ENCODE measurements at regions of chr1 and their contacts with region 1.

Region 1: DNA sequence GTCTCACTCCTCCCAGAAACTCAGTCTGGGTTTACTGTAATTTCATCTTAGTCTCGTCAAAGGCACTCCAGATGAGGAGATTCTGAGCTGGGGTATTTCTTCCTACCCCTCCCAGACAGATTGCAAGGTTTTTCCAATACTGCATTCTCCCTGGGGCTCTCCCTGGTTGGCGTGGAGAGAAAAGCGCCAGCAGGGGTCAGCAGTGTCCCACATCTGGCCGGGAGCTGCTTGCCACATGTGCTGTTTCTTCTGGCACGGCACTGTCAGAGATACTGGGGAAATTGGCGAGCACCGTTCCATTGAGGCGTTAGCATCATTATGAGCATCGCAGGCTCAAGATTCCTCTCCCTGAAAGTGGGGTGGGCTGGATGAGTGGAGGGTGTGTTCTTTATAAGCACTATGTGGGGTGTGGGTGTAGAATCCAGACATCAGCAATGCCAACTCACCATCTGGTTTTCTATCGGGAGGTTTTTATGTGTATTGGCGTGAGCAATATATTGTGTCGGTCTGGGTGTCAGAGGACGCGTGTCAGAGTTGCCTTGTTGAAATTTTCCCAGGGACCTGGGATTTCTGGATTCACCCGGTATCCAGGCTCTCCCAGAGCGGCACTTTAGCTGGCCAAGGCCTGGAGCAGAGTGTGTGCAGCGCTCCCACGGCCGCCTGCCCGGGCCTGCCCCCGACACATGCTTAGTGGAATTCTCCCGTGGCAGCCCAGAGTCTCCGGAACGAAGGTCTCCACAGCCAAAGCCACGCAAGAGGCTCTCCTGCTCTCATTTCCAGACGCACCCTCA is 8.0 kb upstream of the NAV1 start:
- DNase-seq: peak; percentile 83
- ATAC-seq: peak; percentile 82
- H3K4me3 ChIP-seq: no peak overlapping the region
- H3K27ac ChIP-seq: no peak overlapping the region
- H3K4me1 ChIP-seq: peaks cover 13% of the 10 kb centered on the region
- H3K27me3 ChIP-seq: no peaks in the 10 kb centered on the region
- CTCF ChIP-seq: peak; percentile 97
- POLR2A ChIP-seq: peak; percentile 43; the same call in 1 of the 2 replicates
- RAD21 ChIP-seq: peak; percentile 95

Region 2: DNA sequence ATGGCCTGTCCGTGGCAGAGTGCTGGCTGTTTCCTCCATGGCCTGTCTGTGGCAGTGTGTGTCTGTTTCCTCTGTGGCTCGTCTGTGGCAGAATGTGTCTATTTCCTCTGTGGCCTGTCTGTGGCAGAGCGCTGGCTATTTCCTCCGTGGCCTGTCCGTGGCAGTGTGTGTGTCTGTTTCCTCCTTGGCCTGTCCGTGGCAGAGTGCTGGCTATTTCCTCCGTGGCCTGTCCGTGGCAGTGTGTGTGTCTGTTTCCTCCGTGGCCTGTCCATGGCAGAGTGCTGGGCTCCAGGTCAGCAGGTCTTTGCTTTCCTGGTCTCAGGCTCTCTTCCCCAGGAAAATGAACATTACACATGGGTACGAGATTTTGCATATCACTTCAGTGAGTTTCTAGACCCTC is 159.6 kb after region 1 on chr1:
- CTCF ChIA-PET with region 1: no interaction called
- POLR2A ChIA-PET with region 1: no interaction called
- dilution Hi-C with region 1: no loop called
- in situ Hi-C with region 1: no loop called
- intact Hi-C with region 1: no loop called
- DNase-seq: no peak
- ATAC-seq: no peak
- H3K4me3 ChIP-seq: no peak overlapping the region
- H3K27ac ChIP-seq: no peak overlapping the region
- H3K4me1 ChIP-seq: peaks cover 28% of the 10 kb centered on the region
- H3K27me3 ChIP-seq: no peaks in the 10 kb centered on the region
- CTCF ChIP-seq: no peak
- POLR2A ChIP-seq: no peak
- RAD21 ChIP-seq: no peak

Region 3: DNA sequence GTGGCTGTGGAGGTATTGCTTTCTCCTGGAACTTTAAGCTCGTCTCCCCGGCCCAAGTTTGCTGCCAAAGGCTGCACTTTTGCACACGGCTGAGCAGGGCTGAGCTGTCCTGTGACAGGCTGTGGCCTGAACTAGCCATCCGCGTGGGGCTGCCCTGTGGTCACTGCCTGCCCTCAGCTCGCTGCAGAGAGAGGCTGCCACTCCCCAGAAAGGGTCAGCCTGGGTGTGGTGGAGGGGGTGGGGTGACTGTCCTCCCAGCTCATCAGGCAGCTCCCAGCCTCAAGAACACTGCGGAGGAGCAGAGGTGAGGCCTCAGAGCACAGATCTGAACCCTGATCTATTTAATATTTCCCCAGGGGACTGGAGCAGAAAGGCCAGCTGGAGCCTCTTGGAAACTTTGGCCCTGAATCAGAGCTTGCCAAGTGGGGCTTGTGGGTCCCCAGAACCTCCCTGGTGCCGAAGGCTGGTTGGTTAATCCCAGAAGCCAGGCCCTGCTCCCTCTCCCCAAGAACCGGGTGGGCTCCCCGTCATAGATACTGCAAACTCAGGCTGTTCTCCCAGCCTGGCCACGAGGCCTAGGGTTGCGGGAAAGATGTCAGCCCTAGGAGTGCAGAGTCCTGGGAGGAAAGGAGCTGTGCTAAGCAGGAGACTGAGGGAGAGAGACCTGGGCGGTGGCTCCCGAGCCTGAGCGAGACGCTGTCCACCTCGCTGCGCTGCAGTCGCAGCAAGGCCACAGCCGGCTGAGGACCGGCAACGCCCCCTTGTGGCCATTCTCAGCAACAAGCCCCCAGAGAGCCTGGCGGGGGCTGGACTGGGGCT is 172.9 kb after region 1 on chr1:
- CTCF ChIA-PET with region 1: no interaction called
- POLR2A ChIA-PET with region 1: no interaction called
- dilution Hi-C with region 1: no loop called
- in situ Hi-C with region 1: no loop called
- intact Hi-C with region 1: loop called (anchors 1 kb)
- DNase-seq: peak; percentile 77
- ATAC-seq: peak; percentile 81
- H3K4me3 ChIP-seq: no peak overlapping the region
- H3K27ac ChIP-seq: peak overlapping the region; percentile 69
- H3K4me1 ChIP-seq: peaks cover 20% of the 10 kb centered on the region
- H3K27me3 ChIP-seq: no peaks in the 10 kb centered on the region
- CTCF ChIP-seq: peak; percentile 95
- POLR2A ChIP-seq: peak; percentile 61; the same call in 1 of the 2 replicates
- RAD21 ChIP-seq: peak; percentile 97

Region 4: GRCh38 chr1:201792534-201793305 is 261.8 kb after region 1 on chr1:
- CTCF ChIA-PET with region 1: interaction called, 5 read pairs
- POLR2A ChIA-PET with region 1: no interaction called
- dilution Hi-C with region 1: no loop called
- in situ Hi-C with region 1: no loop called
- intact Hi-C with region 1: loop called (anchors 1 kb)
- DNase-seq: peak; percentile 85
- ATAC-seq: peak; percentile 84
- H3K4me3 ChIP-seq: no peak overlapping the region
- H3K27ac ChIP-seq: peak overlapping the region; percentile 69
- H3K4me1 ChIP-seq: peaks cover 32% of the 10 kb centered on the region
- H3K27me3 ChIP-seq: no peaks in the 10 kb centered on the region
- CTCF ChIP-seq: peak; percentile 97
- POLR2A ChIP-seq: peak; percentile 35; the same call in 1 of the 2 replicates
- RAD21 ChIP-seq: peak; percentile 99

Region 5: DNA sequence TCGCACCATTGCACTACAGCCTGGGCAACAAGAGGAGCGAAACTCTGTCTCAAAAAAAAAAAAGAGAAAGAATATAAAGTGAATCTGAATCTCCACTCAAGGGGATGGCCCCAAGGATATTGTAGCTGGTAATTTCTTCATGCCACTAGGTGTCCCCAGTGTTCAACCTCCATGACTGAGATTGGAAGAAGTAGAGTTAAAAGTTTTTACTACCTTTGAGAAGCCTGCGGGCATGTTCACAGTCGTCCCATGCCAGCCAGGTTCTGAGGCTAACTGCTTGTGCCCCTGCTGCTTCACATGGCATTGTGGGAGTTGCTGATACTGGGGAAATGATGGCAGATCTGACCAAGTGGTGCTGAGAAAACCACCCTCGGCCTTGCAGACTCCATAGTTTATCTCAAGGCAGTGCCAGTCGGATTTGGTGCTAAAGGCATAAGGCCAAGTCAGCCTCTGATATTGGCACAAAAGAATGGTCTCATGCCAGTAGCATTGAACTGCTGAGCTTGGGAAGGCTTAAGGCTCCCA is 347.0 kb after region 1 on chr1:
- CTCF ChIA-PET with region 1: no interaction called
- POLR2A ChIA-PET with region 1: no interaction called
- dilution Hi-C with region 1: no loop called
- in situ Hi-C with region 1: no loop called
- intact Hi-C with region 1: loop called (anchors 2 kb)
- DNase-seq: peak; percentile 63
- ATAC-seq: peak; percentile 75
- H3K4me3 ChIP-seq: no peak overlapping the region
- H3K27ac ChIP-seq: no peak overlapping the region
- H3K4me1 ChIP-seq: peaks cover 4% of the 10 kb centered on the region
- H3K27me3 ChIP-seq: no peaks in the 10 kb centered on the region
- CTCF ChIP-seq: peak; percentile 73
- POLR2A ChIP-seq: no peak
- RAD21 ChIP-seq: peak; percentile 71

Region 6: DNA sequence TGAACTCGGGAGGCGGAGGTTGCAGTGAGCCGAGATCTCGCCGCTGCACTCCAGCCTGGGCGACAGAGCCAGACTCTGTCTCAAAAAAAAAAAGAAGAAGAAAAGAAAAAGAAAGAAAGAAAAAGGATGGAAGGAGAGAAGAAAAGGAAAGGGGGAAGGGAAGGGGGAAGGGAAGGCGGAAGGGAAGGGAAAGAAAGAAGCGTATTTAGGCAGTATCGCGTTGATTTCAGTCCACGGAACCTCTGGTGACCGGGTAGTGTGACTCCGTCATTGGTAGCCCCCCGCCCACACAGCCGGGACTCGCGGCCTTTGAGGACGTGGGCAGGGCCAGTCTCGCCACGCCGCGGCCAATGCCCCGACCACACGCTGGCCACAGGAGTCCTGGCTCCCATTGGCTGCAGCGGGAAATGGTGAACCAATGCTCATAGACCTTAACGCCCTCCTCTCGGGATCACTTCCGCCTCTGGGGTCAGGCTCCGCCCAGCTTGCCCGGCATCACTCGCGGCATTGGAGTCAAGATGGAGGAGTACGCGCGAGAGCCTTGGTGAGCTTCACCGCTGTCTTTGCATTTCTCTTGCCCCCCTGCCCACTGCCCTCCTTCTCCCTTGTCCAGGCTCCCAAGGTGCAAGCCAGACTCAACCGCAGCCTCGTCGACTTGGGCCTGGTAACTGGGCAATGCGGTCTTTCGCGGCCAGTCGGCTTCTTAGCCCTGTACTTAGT is 424.2 kb after region 1 on chr1 and contains the start of gene TIMM17A:
- CTCF ChIA-PET with region 1: no interaction called
- POLR2A ChIA-PET with region 1: no interaction called
- dilution Hi-C with region 1: no loop called
- in situ Hi-C with region 1: loop called (anchors 25 kb)
- intact Hi-C with region 1: no loop called
- DNase-seq: peak; percentile 98
- ATAC-seq: peak; percentile 100
- H3K4me3 ChIP-seq: peak within 1 kb of the TSS; percentile 82
- H3K27ac ChIP-seq: peak within 1 kb of the TSS; percentile 93
- H3K4me1 ChIP-seq: peaks cover 2% of the 10 kb centered on the region; the same call in 1 of the 2 replicates
- H3K27me3 ChIP-seq: no peaks in the 10 kb centered on the region
- CTCF ChIP-seq: no peak
- POLR2A ChIP-seq: peak; percentile 97
- RAD21 ChIP-seq: no peak; the same call in 1 of the 2 replicates
- total RNA-seq, gene TIMM17A: 87.3 and 114 TPM in 2 replicates

Region 7: DNA sequence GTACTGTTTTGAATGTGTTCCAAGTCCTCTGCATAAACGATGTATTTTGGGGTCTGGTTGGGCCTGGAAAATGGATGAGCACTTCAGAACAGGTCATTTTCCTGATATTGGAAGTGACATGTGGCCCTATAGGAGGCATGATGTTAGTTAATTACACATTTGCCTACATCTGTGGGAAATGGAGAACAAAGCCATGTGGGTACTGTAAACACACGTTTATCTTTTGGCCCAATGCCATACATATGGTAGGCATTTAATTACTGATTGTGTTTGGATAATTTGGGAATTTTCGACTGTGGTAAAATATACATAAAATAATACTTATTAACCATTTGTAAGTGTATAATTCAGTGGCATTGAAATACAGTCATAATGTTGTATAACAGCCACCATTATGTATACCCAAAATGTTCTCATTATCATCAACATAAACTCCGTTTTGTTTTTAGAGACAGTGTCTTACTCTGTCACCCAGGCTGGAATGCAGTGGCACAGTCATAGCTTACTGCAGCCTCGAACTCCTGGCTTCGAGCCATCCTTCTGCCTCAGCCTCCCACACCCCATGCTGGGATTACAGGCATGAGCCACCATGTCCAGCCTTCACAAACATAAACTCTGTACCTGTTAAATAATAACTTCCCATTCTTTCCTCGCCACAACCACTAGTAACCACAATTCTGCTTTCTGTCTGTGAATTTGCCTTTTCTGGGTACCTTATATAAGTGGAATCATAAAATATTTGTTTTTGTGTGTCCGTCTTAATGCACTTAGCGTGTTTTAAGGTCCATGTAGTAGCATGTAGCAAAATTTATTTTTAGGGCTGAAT is 439.6 kb after region 1 on chr1:
- CTCF ChIA-PET with region 1: no interaction called
- POLR2A ChIA-PET with region 1: no interaction called
- dilution Hi-C with region 1: no loop called
- in situ Hi-C with region 1: loop called (anchors 25 kb)
- intact Hi-C with region 1: loop called (anchors 10 kb)
- DNase-seq: peak; percentile 58
- ATAC-seq: peak; percentile 56; the same call in 1 of the 2 replicates
- H3K4me3 ChIP-seq: no peak overlapping the region
- H3K27ac ChIP-seq: no peak overlapping the region
- H3K4me1 ChIP-seq: no peaks in the 10 kb centered on the region; the same call in 1 of the 2 replicates
- H3K27me3 ChIP-seq: no peaks in the 10 kb centered on the region
- CTCF ChIP-seq: no peak
- POLR2A ChIP-seq: no peak
- RAD21 ChIP-seq: no peak

Region 8: GRCh38 chr1:202135221-202135721 is 604.3 kb after region 1 on chr1:
- CTCF ChIA-PET with region 1: no interaction called
- POLR2A ChIA-PET with region 1: no interaction called
- dilution Hi-C with region 1: no loop called
- in situ Hi-C with region 1: loop called (anchors 25 kb)
- intact Hi-C with region 1: no loop called
- DNase-seq: peak; percentile 54
- ATAC-seq: peak; percentile 93
- H3K4me3 ChIP-seq: no peak overlapping the region
- H3K27ac ChIP-seq: no peak overlapping the region
- H3K4me1 ChIP-seq: 0 out of 2 replicates have a peak, but pooled peaks cover 1% of the 10 kb centered on the region
- H3K27me3 ChIP-seq: no peaks in the 10 kb centered on the region
- CTCF ChIP-seq: peak; percentile 78
- POLR2A ChIP-seq: no peak
- RAD21 ChIP-seq: peak; percentile 72